ENCODE measurements at regions of chr16 and their contacts with region 1.

Region 1: DNA sequence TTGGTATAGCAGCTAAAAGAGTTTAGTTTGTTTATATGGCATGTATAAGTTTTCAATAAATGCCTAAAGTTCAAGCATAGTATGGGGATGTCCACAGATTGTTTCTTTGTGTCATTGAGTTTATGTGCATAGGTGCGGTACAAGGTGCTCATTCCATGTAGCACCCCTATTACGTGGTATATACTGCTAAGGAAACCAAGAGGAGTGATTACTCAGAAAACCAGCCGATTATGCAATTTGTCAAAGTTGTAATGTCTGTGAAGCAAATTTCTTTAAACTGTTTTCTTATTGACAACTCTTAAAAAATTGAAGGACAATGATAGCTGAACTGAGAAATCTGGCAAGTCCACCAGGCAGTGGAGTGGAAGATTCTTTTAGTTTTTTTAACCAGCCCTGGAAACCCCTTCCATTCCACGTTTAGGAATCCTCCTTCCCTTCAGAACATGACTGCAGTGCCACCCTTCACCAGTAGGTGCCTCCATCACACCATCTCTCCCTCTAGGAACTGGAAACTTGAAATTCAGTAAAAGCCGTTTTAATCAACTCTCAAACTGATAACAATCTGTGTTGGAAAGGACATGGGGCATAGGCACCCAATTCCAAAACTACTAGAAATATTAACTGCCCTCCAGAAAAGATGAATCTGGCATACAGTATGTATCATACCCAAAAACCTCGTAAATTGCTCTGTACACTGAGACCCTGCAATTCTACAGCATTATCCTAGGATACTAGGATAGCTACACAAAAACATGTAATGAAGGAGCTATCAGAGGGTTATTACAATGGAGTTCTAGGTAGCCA is 43.5 kb downstream of the REXO5 start:
- DNase-seq: peak in 3 of 4 donors; percentile 56 to 73 (median 57)
- ATAC-seq: peak; percentile 82
- H3K4me3 ChIP-seq: no peak overlapping the region
- H3K27ac ChIP-seq: peak overlapping the region; percentile 49 to 67
- H3K4me1 ChIP-seq: peaks cover 22 to 51% of the 10 kb centered on the region in 2 donors
- H3K27me3 ChIP-seq: no peaks in the 10 kb centered on the region
- CTCF ChIP-seq: peak; percentile 97

Region 2: GRCh38 chr16:20114356-20114755 is 735.4 kb before region 1 on chr16:
- intact Hi-C with region 1: no loop called
- DNase-seq: no peak
- ATAC-seq: no peak
- H3K4me3 ChIP-seq: no peak overlapping the region
- H3K27ac ChIP-seq: no peak overlapping the region
- H3K4me1 ChIP-seq: no peaks in the 10 kb centered on the region
- H3K27me3 ChIP-seq: peaks cover 0 to 5% of the 10 kb centered on the region in 2 donors
- CTCF ChIP-seq: no peak

Region 3: DNA sequence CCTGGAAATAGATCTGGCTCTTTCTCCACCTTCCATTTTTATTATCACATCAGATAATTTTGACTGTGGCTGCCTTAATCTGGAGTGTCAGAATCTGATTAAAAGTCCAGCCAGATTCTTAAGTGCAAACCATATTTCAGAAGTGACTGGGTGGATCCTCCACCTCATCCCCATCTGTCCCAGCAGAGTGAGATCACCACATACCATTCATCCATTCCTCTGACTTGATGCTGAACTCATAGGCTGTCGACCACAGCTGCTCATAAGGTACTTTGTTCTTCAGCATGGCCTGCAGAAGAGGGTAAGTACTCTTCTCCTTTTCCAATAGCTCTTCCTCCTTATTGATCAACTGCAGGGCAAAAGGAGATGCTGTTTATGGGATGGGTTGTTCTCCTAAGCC is 247.4 kb after region 1 on chr16:
- intact Hi-C with region 1: loop called in 1 of 2 experiments (anchors 10 kb)
- DNase-seq: no peak
- ATAC-seq: no peak
- H3K4me3 ChIP-seq: no peak overlapping the region
- H3K27ac ChIP-seq: no peak overlapping the region
- H3K4me1 ChIP-seq: no peaks in the 10 kb centered on the region
- H3K27me3 ChIP-seq: peaks cover 0 to 7% of the 10 kb centered on the region in 2 donors
- CTCF ChIP-seq: no peak